Panc1 (cell line): ENCODE measurements at regions of chr2 and their contacts with region 1.

Region 1: DNA sequence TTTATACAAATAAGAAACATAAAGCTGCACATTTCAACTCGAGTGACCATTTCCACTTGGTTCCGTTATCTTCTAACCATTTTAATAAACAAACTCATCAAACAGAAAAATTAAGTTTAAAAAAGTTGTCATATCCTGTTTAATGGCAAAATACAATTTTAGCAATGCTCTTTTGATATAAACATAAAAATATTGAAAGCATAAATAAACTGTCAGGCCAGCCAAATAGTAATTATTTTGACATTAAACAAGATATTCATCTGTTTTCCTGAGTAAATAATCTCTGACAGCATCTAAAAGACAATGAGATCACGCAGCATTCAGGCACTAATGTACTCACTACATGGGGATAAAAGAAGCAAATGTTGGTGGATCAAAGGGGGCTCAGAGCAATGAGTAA is 145.3 kb upstream of the ATP5MC3 start:
- DNase-seq: no peak
- ATAC-seq: no peak
- H3K4me3 ChIP-seq: no peak overlapping the region
- H3K27ac ChIP-seq: no peak overlapping the region
- H3K4me1 ChIP-seq: no peaks in the 10 kb centered on the region
- H3K27me3 ChIP-seq: no peaks in the 10 kb centered on the region
- CTCF ChIP-seq: no peak

Region 2: GRCh38 chr2:175168564-175168945 is 158.2 kb before region 1 on chr2:
- CTCF ChIA-PET with region 1: no interaction called
- POLR2A ChIA-PET with region 1: interaction called, 13 read pairs
- in situ Hi-C with region 1: no loop called
- intact Hi-C with region 1: no loop called
- DNase-seq: no peak
- ATAC-seq: peak; percentile 58
- H3K4me3 ChIP-seq: peak overlapping the region; percentile 79 to 99
- H3K27ac ChIP-seq: peak overlapping the region; percentile 91
- H3K4me1 ChIP-seq: peaks cover 11% of the 10 kb centered on the region
- H3K27me3 ChIP-seq: no peaks in the 10 kb centered on the region
- CTCF ChIP-seq: no peak

Region 3: DNA sequence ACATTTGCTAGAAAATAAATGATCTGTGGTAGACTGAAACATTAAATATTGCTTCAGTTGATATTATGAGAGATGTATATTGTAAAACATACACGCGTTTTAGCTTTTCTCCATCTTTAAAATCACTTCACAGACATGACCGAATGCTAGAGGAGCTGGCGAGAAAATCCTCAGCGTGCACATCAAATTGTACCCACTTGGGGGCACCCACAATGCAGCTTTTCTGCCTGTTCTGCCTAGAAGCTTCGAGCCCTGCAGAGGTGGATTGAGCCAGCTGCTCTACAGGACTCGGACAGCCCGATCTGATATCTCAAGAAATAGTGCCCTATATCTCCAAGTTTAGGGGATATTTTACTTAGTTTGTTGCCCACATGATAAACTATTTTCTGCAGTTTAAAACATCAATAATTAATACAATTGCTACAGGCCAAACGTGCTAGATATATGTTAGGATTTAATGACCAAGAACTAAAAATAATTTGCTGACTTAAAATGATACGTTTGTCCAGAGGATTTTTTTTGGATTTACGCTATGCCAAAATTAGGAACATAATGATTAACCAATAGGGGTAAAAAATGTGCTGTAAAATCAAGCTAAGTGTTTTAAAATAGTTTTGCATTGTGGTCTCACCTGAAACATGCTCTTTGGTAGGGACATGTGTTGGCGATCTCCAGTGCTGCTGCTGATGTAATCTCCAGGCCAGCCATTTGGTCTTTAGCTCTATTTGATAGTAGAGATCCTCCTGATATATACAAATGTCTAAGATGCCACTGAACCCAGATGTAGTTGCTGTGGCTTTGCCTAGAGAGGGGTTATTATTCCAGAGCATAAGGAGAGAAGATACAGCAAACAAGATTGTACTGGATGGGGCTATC is 122.9 kb before region 1 on chr2:
- CTCF ChIA-PET with region 1: interaction called, 12 read pairs
- POLR2A ChIA-PET with region 1: interaction called, 3 read pairs
- in situ Hi-C with region 1: no loop called
- intact Hi-C with region 1: no loop called
- DNase-seq: no peak
- ATAC-seq: peak; percentile 97
- H3K4me3 ChIP-seq: no peak overlapping the region
- H3K27ac ChIP-seq: no peak overlapping the region
- H3K4me1 ChIP-seq: no peaks in the 10 kb centered on the region
- H3K27me3 ChIP-seq: no peaks in the 10 kb centered on the region; the same call in 1 of the 2 replicates
- CTCF ChIP-seq: peak; percentile 81

Region 4: GRCh38 chr2:175432021-175432420 is 105.2 kb after region 1 on chr2:
- CTCF ChIA-PET with region 1: no interaction called
- POLR2A ChIA-PET with region 1: interaction called, 15 read pairs
- in situ Hi-C with region 1: no loop called
- intact Hi-C with region 1: no loop called
- DNase-seq: no peak
- ATAC-seq: no peak
- H3K4me3 ChIP-seq: no peak overlapping the region
- H3K27ac ChIP-seq: no peak overlapping the region
- H3K4me1 ChIP-seq: no peaks in the 10 kb centered on the region
- H3K27me3 ChIP-seq: no peaks in the 10 kb centered on the region; the same call in 1 of the 2 replicates
- CTCF ChIP-seq: no peak

Region 5: GRCh38 chr2:175964195-175964594 is 637.4 kb after region 1 on chr2:
- CTCF ChIA-PET with region 1: no interaction called
- POLR2A ChIA-PET with region 1: no interaction called
- in situ Hi-C with region 1: no loop called
- intact Hi-C with region 1: no loop called
- DNase-seq: no peak
- ATAC-seq: no peak
- H3K4me3 ChIP-seq: no peak overlapping the region
- H3K27ac ChIP-seq: no peak overlapping the region
- H3K4me1 ChIP-seq: no peaks in the 10 kb centered on the region
- H3K27me3 ChIP-seq: no peaks in the 10 kb centered on the region
- CTCF ChIP-seq: peak; percentile 55; the same call in 1 of the 2 replicates